Activated T-helper 2 cell treated with anti-CD3 and anti-CD28 coated beads, Interferon-gamma antibody, Interleukin-2, Interleukin-4, amounts not matched to agents 10 μg/mL and 5 μg/mL and 100 μg/mL, durations not matched to agents 14 hours and 24 hours and 36 hours (primary cell): ENCODE measurements at regions of chr6 and their contacts with region 1.

Region 1: GRCh38 chr6:125790358-125791150 is at the start of gene NCOA7:
- DNase-seq: peak; percentile 76
- H3K4me3 Mint-ChIP-seq: peak within 1 kb of the TSS; percentile 92
- H3K27ac Mint-ChIP-seq: peak within 1 kb of the TSS; percentile 99
- H3K4me1 Mint-ChIP-seq: peaks cover 50% of the 10 kb centered on the region
- H3K27me3 Mint-ChIP-seq: no peaks in the 10 kb centered on the region
- total RNA-seq, gene NCOA7: 40.5 and 43.4 TPM in 2 replicates

Region 2: DNA sequence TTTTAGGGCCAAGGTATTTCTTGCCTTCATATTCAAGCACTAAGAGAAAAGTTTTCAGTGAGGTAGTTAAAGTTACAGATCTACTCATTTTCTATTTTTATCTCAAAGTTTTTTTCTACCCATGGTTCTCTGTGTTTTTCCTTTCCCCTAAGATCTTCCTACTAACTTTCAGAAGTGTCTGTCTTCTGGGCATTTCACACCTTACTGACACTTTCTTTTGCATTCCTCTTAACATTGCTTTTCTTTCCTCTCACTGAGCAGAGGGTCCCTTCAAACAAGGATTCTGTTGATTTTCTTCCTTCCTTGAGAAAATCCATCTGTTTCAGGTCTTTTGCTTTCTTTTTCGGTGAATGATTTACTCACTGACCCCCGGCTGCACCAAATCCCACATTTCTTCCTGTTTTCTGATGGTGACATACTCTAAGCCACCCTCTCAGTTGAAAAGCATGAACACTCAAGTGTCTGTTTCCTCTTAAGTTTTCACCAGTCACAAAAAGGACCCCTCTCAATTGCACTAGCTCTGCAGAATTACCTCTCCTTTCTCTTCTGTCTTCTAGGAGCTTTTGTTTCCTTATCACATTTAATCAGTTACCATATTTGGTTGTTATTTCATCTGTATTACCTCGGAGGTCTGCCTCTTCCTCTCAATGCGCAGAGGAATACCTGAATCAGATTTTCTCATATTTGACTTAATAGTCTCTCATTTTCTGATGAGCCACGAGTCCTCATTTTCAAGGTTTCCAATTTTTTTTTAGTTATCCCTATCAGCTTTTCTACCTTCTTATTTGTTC is 901.8 kb before region 1 on chr6:
- intact Hi-C with region 1: no loop called
- DNase-seq: no peak
- H3K4me3 Mint-ChIP-seq: peak overlapping the region; percentile 19
- H3K27ac Mint-ChIP-seq: peak overlapping the region; percentile 0
- H3K4me1 Mint-ChIP-seq: peaks cover 11% of the 10 kb centered on the region
- H3K27me3 Mint-ChIP-seq: no peaks in the 10 kb centered on the region

Region 3: GRCh38 chr6:125623085-125623484 is 167.5 kb before region 1 on chr6:
- intact Hi-C with region 1: no loop called
- DNase-seq: no peak
- H3K4me3 Mint-ChIP-seq: no peak overlapping the region
- H3K27ac Mint-ChIP-seq: no peak overlapping the region
- H3K4me1 Mint-ChIP-seq: no peaks in the 10 kb centered on the region
- H3K27me3 Mint-ChIP-seq: no peaks in the 10 kb centered on the region

Region 4: GRCh38 chr6:125802943-125803377 is 12.4 kb after region 1 on chr6:
- intact Hi-C with region 1: loop called (anchors 1 kb)
- DNase-seq: no peak
- H3K4me3 Mint-ChIP-seq: no peak overlapping the region
- H3K27ac Mint-ChIP-seq: no peak overlapping the region
- H3K4me1 Mint-ChIP-seq: peaks cover 52% of the 10 kb centered on the region
- H3K27me3 Mint-ChIP-seq: no peaks in the 10 kb centered on the region

Region 5: DNA sequence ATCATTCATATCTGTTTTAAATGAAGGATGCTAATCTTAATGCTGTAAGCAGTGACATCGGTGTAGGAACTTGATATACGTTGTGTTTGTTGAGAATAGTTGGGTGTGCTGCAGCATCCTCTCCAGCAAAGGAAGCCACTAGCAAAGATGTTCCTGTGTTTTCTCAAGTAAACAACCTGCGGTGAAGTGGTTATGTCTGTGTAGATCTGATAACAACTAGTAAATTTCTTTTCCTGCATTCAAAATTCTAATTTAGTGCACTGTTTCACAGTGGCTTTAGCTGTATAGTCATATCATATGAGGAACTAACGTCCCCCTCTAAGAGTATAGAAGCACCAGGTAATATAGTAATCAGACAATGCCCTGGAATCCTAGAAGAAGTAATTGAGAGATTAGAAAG is 38.9 kb after region 1 on chr6:
- intact Hi-C with region 1: loop called (anchors 5 kb)
- DNase-seq: no peak
- H3K4me3 Mint-ChIP-seq: no peak overlapping the region
- H3K27ac Mint-ChIP-seq: no peak overlapping the region
- H3K4me1 Mint-ChIP-seq: peaks cover 61% of the 10 kb centered on the region
- H3K27me3 Mint-ChIP-seq: no peaks in the 10 kb centered on the region

Region 6: DNA sequence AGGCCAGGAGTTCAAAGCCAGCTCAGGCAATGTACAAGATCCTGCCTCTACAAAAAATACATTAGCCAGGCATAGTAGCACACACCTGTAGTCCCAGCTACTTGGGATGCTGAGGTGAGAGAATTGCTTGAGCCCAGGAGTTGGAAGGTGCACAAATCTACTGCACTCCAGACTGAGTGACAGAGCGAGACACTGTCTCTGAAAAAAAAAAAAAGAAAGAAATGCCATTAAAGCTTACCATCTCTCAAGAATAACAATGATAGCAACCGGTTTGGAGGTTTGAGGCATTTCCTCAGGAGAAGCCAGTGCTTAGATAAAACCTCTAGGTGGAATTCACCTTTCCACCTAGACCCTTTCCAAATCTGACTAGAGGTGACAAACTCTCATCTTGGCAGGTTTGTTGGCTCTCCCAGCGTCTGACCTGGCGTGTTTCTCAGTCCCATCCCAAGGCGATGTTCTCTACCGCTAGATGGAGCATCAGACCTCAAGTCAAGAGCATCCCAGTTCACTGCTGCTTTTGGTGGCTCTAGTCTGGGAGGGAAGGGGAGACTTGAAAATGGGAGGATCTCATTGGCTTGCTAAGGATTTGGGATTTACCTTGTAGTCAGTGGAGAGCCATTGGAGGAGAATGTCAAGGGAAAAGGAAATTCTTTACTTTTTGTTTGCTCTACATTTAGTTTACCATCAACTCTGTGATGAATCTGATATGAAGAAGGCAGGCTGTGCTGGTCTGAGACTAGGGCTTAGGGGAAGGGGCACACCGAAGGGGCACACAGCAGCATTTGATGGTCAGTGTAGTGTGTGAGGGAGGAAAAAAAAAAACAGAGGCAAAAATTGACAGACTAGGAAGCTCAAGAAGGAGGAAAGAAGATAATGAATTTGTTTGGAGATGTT is 68.1 kb after region 1 on chr6:
- intact Hi-C with region 1: loop called (anchors 5 kb)
- DNase-seq: no peak
- H3K4me3 Mint-ChIP-seq: no peak overlapping the region
- H3K27ac Mint-ChIP-seq: no peak overlapping the region
- H3K4me1 Mint-ChIP-seq: peaks cover 3% of the 10 kb centered on the region
- H3K27me3 Mint-ChIP-seq: no peaks in the 10 kb centered on the region

Region 7: GRCh38 chr6:125904871-125905270 is 114.3 kb after region 1 on chr6:
- intact Hi-C with region 1: loop called (anchors 1 kb)
- DNase-seq: peak; percentile 22
- H3K4me3 Mint-ChIP-seq: no peak overlapping the region
- H3K27ac Mint-ChIP-seq: peak overlapping the region; percentile 73
- H3K4me1 Mint-ChIP-seq: peaks cover 38% of the 10 kb centered on the region
- H3K27me3 Mint-ChIP-seq: no peaks in the 10 kb centered on the region

Region 8: GRCh38 chr6:125918681-125919566 is 128.4 kb after region 1 on chr6:
- intact Hi-C with region 1: loop called (anchors 1 kb)
- DNase-seq: peak; percentile 48
- H3K4me3 Mint-ChIP-seq: peak overlapping the region; percentile 82
- H3K27ac Mint-ChIP-seq: peak overlapping the region; percentile 88
- H3K4me1 Mint-ChIP-seq: peaks cover 46% of the 10 kb centered on the region
- H3K27me3 Mint-ChIP-seq: no peaks in the 10 kb centered on the region

Region 9: GRCh38 chr6:126127659-126128058 is 337.1 kb after region 1 on chr6:
- intact Hi-C with region 1: no loop called
- DNase-seq: no peak
- H3K4me3 Mint-ChIP-seq: no peak overlapping the region
- H3K27ac Mint-ChIP-seq: no peak overlapping the region
- H3K4me1 Mint-ChIP-seq: no peaks in the 10 kb centered on the region
- H3K27me3 Mint-ChIP-seq: no peaks in the 10 kb centered on the region